K562 (cell line): ENCODE measurements at regions of chr6 and their contacts with region 1.

Region 1: DNA sequence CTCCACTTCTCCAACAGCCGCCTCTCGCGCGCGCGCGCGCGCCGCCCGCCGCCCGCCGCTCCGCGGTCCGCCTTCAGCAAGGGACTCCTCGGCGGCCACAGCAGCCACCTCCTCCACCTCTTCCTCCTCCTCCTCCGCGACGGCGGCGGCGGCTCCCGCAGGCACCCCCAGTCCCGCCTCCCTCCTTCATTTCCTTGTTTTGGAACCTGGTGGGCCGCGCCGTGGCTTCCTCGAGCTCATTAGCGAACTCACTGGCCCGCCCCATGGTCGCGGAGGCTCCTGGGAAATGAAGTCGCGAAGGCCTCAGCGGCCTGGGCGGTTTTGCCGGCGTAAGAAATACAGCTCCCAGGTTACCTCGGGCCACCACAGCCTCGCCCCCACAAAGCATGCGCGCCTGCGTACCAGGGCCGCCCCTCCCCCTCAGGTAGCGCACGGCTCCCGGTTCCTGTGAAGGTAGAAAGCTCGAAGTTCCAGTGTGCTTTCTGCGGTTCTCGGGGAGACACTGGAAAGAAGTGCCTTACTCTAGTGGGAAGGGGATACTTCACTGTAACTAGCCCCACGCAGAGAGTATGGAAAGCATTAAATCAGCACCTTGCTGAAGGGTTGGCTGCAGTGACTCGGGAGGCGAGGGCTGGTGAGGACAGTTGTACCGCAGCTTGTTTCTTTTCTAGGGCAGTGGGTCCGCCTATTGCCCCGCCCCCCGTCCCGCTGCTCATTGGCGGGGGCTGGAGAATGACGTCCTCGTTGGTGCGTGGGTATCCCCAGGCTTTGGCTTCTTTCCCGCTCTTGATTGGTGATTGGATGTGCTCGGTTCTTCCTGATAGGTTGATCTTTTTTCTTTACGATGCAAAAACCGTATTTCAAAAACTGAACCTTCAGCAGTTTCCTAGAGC is at the start of gene CDK19:
- DNase-seq: peak; percentile 95 to 99 (median 97)
- ATAC-seq: peak; percentile 92
- H3K4me3 ChIP-seq: peak within 1 kb of the TSS; percentile 82
- H3K27ac ChIP-seq: peak within 1 kb of the TSS; percentile 100
- H3K4me1 ChIP-seq: peaks cover 21 to 42% of the 10 kb centered on the region in 2 experiments
- H3K27me3 ChIP-seq: no peaks in the 10 kb centered on the region
- CTCF ChIP-seq: no peak
- EP300 ChIP-seq: no peak
- POLR2A ChIP-seq: peak; percentile 99
- RAD21 ChIP-seq: 0 out of 4 replicates have a peak, but pooled peaks of 1 of the 2 experiments have one; percentile 9
- polyA plus RNA-seq, gene CDK19: 3.8 to 4.0 TPM

Region 2: GRCh38 chr6:110786271-110786670 is 29.2 kb before region 1 on chr6:
- CTCF ChIA-PET with region 1: no interaction called
- POLR2A ChIA-PET with region 1: interaction called, 15 read pairs
- in situ Hi-C with region 1: no loop called
- intact Hi-C with region 1: no loop called
- DNase-seq: no peak
- ATAC-seq: no peak
- H3K4me3 ChIP-seq: no peak overlapping the region
- H3K27ac ChIP-seq: no peak overlapping the region
- H3K4me1 ChIP-seq: no peaks in the 10 kb centered on the region
- H3K27me3 ChIP-seq: no peaks in the 10 kb centered on the region; a peak in 1 of 5 replicates
- CTCF ChIP-seq: no peak
- EP300 ChIP-seq: no peak
- POLR2A ChIP-seq: no peak
- RAD21 ChIP-seq: no peak

Region 3: GRCh38 chr6:110799189-110799588 is 16.3 kb before region 1 on chr6:
- CTCF ChIA-PET with region 1: no interaction called
- POLR2A ChIA-PET with region 1: interaction called, 12 read pairs
- in situ Hi-C with region 1: no loop called
- intact Hi-C with region 1: no loop called
- DNase-seq: no peak
- ATAC-seq: no peak
- H3K4me3 ChIP-seq: no peak overlapping the region
- H3K27ac ChIP-seq: no peak overlapping the region
- H3K4me1 ChIP-seq: no peaks in the 10 kb centered on the region; a peak in 1 of 5 replicates
- H3K27me3 ChIP-seq: no peaks in the 10 kb centered on the region
- CTCF ChIP-seq: no peak
- EP300 ChIP-seq: no peak
- POLR2A ChIP-seq: no peak
- RAD21 ChIP-seq: no peak

Region 4: GRCh38 chr6:110828396-110828795 is 12.9 kb after region 1 on chr6:
- CTCF ChIA-PET with region 1: no interaction called
- POLR2A ChIA-PET with region 1: interaction called, 20 read pairs
- in situ Hi-C with region 1: no loop called
- intact Hi-C with region 1: no loop called
- DNase-seq: no peak
- ATAC-seq: no peak
- H3K4me3 ChIP-seq: no peak overlapping the region
- H3K27ac ChIP-seq: no peak overlapping the region
- H3K4me1 ChIP-seq: no peaks in the 10 kb centered on the region
- H3K27me3 ChIP-seq: no peaks in the 10 kb centered on the region; a peak in 1 of 5 replicates
- CTCF ChIP-seq: no peak
- EP300 ChIP-seq: no peak
- POLR2A ChIP-seq: no peak
- RAD21 ChIP-seq: no peak

Region 5: GRCh38 chr6:111985202-111985731 is 1169.8 kb after region 1 on chr6:
- CTCF ChIA-PET with region 1: no interaction called
- POLR2A ChIA-PET with region 1: no interaction called
- in situ Hi-C with region 1: no loop called
- intact Hi-C with region 1: no loop called
- DNase-seq: no peak
- ATAC-seq: no peak
- H3K4me3 ChIP-seq: no peak overlapping the region
- H3K27ac ChIP-seq: no peak overlapping the region
- H3K4me1 ChIP-seq: no peaks in the 10 kb centered on the region
- H3K27me3 ChIP-seq: peaks cover 9 to 23% of the 10 kb centered on the region in 2 experiments; a peak in 3 of 5 replicates
- CTCF ChIP-seq: no peak
- EP300 ChIP-seq: no peak
- POLR2A ChIP-seq: no peak
- RAD21 ChIP-seq: no peak